GM12878 (cell line): ENCODE measurements at regions of chr6 and their contacts with region 1.

Region 1: GRCh38 chr6:113632220-113632864 is 224.8 kb upstream of the MARCKS start:
- DNase-seq: peak; percentile 91
- ATAC-seq: peak; percentile 54
- H3K4me3 ChIP-seq: peak overlapping the region; percentile 19; the same call in 1 of the 2 replicates
- H3K27ac ChIP-seq: peak overlapping the region; percentile 100
- H3K4me1 ChIP-seq: peaks cover 77% of the 10 kb centered on the region
- H3K27me3 ChIP-seq: no peaks in the 10 kb centered on the region
- CTCF ChIP-seq: no peak
- EP300 ChIP-seq: 0 out of 4 replicates have a peak, but pooled peaks of 1 of the 2 experiments have one; percentile 50
- POLR2A ChIP-seq: peak; percentile 88
- RAD21 ChIP-seq: 0 out of 2 replicates have a peak, but pooled peaks have one; percentile 1

Region 2: DNA sequence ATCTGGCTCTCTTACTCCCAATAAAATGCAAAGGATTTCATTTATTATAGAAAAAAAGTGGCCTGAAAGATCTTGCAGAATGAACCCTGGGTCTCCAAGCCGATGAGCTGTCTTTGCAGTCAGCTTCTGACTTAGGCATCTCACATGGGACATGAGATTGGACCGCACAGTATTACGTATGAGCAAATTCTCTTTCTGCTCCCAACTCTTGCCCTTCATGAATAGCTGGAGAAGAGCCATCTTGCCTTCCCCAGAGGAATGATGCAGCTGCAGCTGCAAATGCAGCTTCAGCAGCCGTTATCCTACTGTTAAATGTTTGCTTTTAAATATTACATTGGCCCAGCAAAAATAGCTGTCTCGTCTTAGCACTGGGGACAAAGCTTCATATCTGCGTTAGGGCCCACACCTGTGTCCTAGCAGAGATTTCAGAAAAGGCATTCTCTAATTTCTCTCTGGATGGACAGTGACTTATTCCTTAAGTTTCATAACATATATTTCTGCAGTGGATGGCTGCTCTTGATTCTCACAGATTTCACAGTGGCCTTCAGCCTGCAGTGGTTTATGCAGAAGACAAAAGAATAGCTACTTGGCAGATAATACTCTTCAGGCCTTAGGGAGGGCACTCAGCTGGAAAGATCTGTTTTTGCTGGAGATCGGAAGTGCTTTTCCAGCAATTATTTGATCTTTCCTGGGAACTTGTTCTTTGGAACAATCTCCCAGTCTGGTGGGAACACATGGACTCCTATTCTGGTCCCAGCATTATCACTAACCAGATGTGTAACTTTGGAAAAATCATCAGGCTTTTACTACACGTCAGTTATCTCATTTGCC is 1888.3 kb before region 1 on chr6:
- CTCF ChIA-PET with region 1: no interaction called
- POLR2A ChIA-PET with region 1: no interaction called
- RAD21 ChIA-PET with region 1: no interaction called
- SMC1A ChIA-PET with region 1: no interaction called
- in situ Hi-C with region 1: loop called (anchors 25 kb)
- intact Hi-C with region 1: loop called (anchors 2 kb)
- DNase-seq: no peak
- ATAC-seq: no peak
- H3K4me3 ChIP-seq: no peak overlapping the region
- H3K27ac ChIP-seq: no peak overlapping the region
- H3K4me1 ChIP-seq: peaks cover 58% of the 10 kb centered on the region
- H3K27me3 ChIP-seq: no peaks in the 10 kb centered on the region
- CTCF ChIP-seq: no peak
- EP300 ChIP-seq: no peak
- POLR2A ChIP-seq: no peak
- RAD21 ChIP-seq: no peak

Region 3: GRCh38 chr6:113271437-113271836 is 360.9 kb before region 1 on chr6:
- CTCF ChIA-PET with region 1: no interaction called
- POLR2A ChIA-PET with region 1: no interaction called
- RAD21 ChIA-PET with region 1: no interaction called
- SMC1A ChIA-PET with region 1: no interaction called
- in situ Hi-C with region 1: no loop called
- intact Hi-C with region 1: no loop called
- DNase-seq: no peak
- ATAC-seq: no peak
- H3K4me3 ChIP-seq: no peak overlapping the region
- H3K27ac ChIP-seq: no peak overlapping the region
- H3K4me1 ChIP-seq: no peaks in the 10 kb centered on the region
- H3K27me3 ChIP-seq: no peaks in the 10 kb centered on the region
- CTCF ChIP-seq: no peak
- EP300 ChIP-seq: no peak
- POLR2A ChIP-seq: no peak
- RAD21 ChIP-seq: no peak

Region 4: DNA sequence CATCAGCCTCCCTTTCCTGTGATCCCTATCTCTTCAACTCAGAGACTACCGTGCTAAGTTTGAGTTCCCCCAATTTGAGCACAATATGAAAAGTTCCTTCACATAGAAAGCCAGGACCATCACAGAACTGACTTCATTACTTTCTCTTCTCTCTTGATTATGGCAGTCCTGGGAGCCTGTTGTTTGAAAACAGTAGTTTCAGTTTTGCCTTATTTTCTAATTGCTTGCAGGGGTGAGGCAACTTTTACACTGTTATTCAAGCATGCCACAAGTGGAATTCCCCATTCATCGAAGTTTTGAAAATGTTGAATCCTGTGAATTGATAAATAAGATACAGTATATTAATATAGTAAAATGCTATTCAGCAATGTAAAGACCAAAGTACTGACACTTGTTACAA is 344.9 kb before region 1 on chr6:
- CTCF ChIA-PET with region 1: no interaction called
- POLR2A ChIA-PET with region 1: interaction called, 3 read pairs
- RAD21 ChIA-PET with region 1: interaction called, 14 read pairs
- SMC1A ChIA-PET with region 1: interaction called, 6 read pairs
- in situ Hi-C with region 1: no loop called
- intact Hi-C with region 1: loop called (anchors 5 kb)
- DNase-seq: peak; percentile 37
- ATAC-seq: peak; percentile 96
- H3K4me3 ChIP-seq: no peak overlapping the region
- H3K27ac ChIP-seq: no peak overlapping the region
- H3K4me1 ChIP-seq: no peaks in the 10 kb centered on the region
- H3K27me3 ChIP-seq: no peaks in the 10 kb centered on the region
- CTCF ChIP-seq: no peak
- EP300 ChIP-seq: 0 out of 4 replicates have a peak, but pooled peaks of 1 of the 2 experiments have one; percentile 20
- POLR2A ChIP-seq: no peak
- RAD21 ChIP-seq: no peak

Region 5: GRCh38 chr6:113359155-113360140 is 272.9 kb before region 1 on chr6:
- CTCF ChIA-PET with region 1: no interaction called
- POLR2A ChIA-PET with region 1: no interaction called
- RAD21 ChIA-PET with region 1: interaction called, 3 read pairs
- SMC1A ChIA-PET with region 1: interaction called, 3 read pairs
- in situ Hi-C with region 1: no loop called
- intact Hi-C with region 1: loop called (anchors 5 kb)
- DNase-seq: no peak
- ATAC-seq: peak; percentile 51; the same call in 2 of the 3 replicates
- H3K4me3 ChIP-seq: no peak overlapping the region
- H3K27ac ChIP-seq: no peak overlapping the region
- H3K4me1 ChIP-seq: no peaks in the 10 kb centered on the region
- H3K27me3 ChIP-seq: no peaks in the 10 kb centered on the region
- CTCF ChIP-seq: no peak
- EP300 ChIP-seq: no peak
- POLR2A ChIP-seq: no peak
- RAD21 ChIP-seq: no peak

Region 6: GRCh38 chr6:113654396-113654795 is 22.1 kb after region 1 on chr6:
- CTCF ChIA-PET with region 1: interaction called, 146 read pairs
- POLR2A ChIA-PET with region 1: interaction called, 304 read pairs
- RAD21 ChIA-PET with region 1: interaction called, 395 read pairs
- SMC1A ChIA-PET with region 1: interaction called, 489 read pairs
- in situ Hi-C with region 1: no loop called
- intact Hi-C with region 1: no loop called
- DNase-seq: no peak
- ATAC-seq: no peak
- H3K4me3 ChIP-seq: no peak overlapping the region
- H3K27ac ChIP-seq: peak overlapping the region; percentile 58; the same call in 1 of the 2 replicates
- H3K4me1 ChIP-seq: peaks cover 45% of the 10 kb centered on the region
- H3K27me3 ChIP-seq: no peaks in the 10 kb centered on the region
- CTCF ChIP-seq: no peak
- EP300 ChIP-seq: no peak
- POLR2A ChIP-seq: no peak
- RAD21 ChIP-seq: no peak

Region 7: DNA sequence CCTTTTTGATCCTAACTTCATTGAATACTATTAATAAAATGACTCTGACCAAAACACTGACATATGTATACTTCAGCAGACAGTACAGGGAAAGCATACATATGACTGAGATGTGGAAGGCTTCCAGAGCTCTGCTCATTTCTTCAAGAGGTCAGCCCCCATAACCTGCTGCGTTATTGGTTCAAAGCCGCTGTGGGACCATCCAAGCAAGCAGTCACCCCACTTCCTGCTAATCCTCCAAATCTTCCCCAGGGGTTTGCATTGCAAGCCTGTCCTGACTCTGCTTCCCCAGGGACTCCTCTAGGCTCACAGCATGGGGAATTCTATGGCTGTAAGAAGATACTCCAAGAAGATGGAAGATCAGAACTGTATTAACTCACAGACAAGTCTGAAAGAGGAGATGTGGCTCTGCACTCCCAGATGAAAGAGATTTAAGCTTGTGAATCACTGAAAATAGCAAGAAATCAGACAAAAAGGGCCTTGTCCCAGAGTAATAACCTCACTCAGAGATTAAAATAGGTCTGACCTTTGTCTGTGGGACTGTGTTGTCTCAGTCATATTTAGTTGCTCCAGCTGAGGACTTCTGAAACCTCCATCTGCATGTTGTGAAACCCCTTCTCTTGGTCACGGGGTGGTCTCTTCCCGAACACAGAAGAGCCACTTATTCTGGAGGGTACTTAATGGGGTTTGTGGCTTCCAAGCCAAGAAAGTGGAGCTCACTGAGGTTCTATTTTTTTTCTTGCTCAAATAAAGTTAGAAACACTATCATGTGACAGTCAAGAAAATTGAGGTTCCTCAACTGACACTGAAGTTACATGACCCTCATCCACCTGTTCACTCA is 123.3 kb after region 1 on chr6:
- CTCF ChIA-PET with region 1: no interaction called
- POLR2A ChIA-PET with region 1: no interaction called
- RAD21 ChIA-PET with region 1: interaction called, 3 read pairs
- SMC1A ChIA-PET with region 1: interaction called, 3 read pairs
- in situ Hi-C with region 1: no loop called
- intact Hi-C with region 1: loop called (anchors 5 kb)
- DNase-seq: peak; percentile 64
- ATAC-seq: peak; percentile 73
- H3K4me3 ChIP-seq: no peak overlapping the region; the same call in 1 of the 2 replicates
- H3K27ac ChIP-seq: peak overlapping the region; percentile 94
- H3K4me1 ChIP-seq: peaks cover 26% of the 10 kb centered on the region
- H3K27me3 ChIP-seq: no peaks in the 10 kb centered on the region
- CTCF ChIP-seq: no peak
- EP300 ChIP-seq: peak in 1 of 2 experiments; percentile 55; a peak in 1 of 4 replicates
- POLR2A ChIP-seq: no peak
- RAD21 ChIP-seq: 0 out of 2 replicates have a peak, but pooled peaks have one; percentile 1

Region 8: GRCh38 chr6:113873043-113873667 is 240.8 kb after region 1 on chr6:
- CTCF ChIA-PET with region 1: interaction called, 5 read pairs
- POLR2A ChIA-PET with region 1: interaction called, 3 read pairs
- RAD21 ChIA-PET with region 1: interaction called, 21 read pairs
- SMC1A ChIA-PET with region 1: interaction called, 23 read pairs
- in situ Hi-C with region 1: no loop called
- intact Hi-C with region 1: no loop called
- DNase-seq: no peak
- ATAC-seq: peak; percentile 89
- H3K4me3 ChIP-seq: peak overlapping the region; percentile 65
- H3K27ac ChIP-seq: no peak overlapping the region; the same call in 1 of the 2 replicates
- H3K4me1 ChIP-seq: peaks cover 7% of the 10 kb centered on the region
- H3K27me3 ChIP-seq: no peaks in the 10 kb centered on the region
- CTCF ChIP-seq: peak in 1 of 3 experiments; percentile 17; a peak in 2 of 6 replicates
- EP300 ChIP-seq: peak; percentile 48 to 67; a peak in 2 of 4 replicates
- POLR2A ChIP-seq: no peak
- RAD21 ChIP-seq: 0 out of 2 replicates have a peak, but pooled peaks have one; percentile 21